ENCODE measurements at regions of chr5 and their contacts with region 1.

Region 1: GRCh38 chr5:112551419-112552032 is 132.4 kb upstream of the EPB41L4A start:
- H3K4me3 Mint-ChIP-seq: no peak overlapping the region
- H3K27ac Mint-ChIP-seq: peak overlapping the region; percentile 28
- H3K4me1 Mint-ChIP-seq: no peaks in the 10 kb centered on the region
- H3K27me3 Mint-ChIP-seq: peaks cover 4% of the 10 kb centered on the region

Region 2: DNA sequence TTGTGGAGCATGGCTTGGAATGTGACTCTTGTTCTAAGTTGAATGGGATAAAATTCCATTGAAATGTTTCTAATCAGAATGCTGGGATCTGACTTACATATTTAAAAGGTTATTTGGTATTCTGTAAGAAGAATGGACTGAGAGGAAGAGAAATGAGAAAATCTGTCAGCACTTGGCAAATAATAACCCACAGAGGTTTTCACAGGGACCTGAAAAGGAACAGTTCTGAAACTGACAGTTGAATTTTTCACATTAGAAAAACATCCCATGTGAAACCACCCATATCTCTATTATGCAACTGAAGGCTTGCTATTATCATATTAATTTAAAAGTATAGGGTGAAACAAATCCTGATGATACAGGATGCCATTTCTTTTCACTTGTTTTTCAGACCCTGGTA is 435.2 kb before region 1 on chr5:
- intact Hi-C with region 1: no loop called
- H3K4me3 Mint-ChIP-seq: no peak overlapping the region
- H3K27ac Mint-ChIP-seq: no peak overlapping the region
- H3K4me1 Mint-ChIP-seq: peaks cover 31% of the 10 kb centered on the region
- H3K27me3 Mint-ChIP-seq: peaks cover 8% of the 10 kb centered on the region

Region 3: GRCh38 chr5:112757468-112758208 is 206.1 kb after region 1 on chr5:
- intact Hi-C with region 1: loop called (anchors 1 kb)
- H3K4me3 Mint-ChIP-seq: no peak overlapping the region
- H3K27ac Mint-ChIP-seq: peak overlapping the region; percentile 34
- H3K4me1 Mint-ChIP-seq: peaks cover 5% of the 10 kb centered on the region
- H3K27me3 Mint-ChIP-seq: no peaks in the 10 kb centered on the region

Region 4: DNA sequence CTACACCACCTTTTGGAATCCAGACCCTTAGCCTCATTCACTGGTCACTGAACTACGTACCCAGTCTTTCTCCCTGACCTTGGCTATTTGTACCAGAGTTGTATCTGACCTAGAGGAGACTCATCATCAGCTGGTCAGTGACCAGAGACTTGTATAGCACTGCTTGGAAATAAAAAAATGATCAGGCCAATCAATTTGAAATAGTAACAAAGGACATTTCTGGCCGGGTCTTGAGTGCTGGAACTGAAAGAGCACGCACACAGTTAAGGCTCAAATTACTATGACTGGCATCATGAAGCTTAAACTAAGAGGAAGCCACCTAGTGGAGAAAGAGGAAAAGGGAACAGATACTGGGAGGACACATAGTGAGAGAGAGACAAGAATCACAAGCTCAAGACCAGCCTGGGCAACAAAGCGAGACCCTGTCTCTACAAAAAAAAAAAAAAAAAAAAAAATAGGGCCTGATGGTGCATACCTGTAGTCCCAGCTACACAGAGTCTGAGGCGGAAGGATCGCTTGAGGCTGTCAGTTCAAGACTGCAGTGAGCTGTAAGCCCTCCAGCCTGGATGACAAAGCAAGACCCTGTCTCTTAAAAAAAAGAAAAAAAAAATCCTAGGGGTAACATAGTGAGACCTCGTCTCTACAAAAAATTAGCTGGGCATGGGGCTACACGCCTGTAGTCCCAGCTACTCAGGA is 296.7 kb after region 1 on chr5:
- intact Hi-C with region 1: loop called (anchors 2 kb)
- H3K4me3 Mint-ChIP-seq: no peak overlapping the region
- H3K27ac Mint-ChIP-seq: no peak overlapping the region
- H3K4me1 Mint-ChIP-seq: peaks cover 5% of the 10 kb centered on the region
- H3K27me3 Mint-ChIP-seq: peaks cover 7% of the 10 kb centered on the region

Region 5: DNA sequence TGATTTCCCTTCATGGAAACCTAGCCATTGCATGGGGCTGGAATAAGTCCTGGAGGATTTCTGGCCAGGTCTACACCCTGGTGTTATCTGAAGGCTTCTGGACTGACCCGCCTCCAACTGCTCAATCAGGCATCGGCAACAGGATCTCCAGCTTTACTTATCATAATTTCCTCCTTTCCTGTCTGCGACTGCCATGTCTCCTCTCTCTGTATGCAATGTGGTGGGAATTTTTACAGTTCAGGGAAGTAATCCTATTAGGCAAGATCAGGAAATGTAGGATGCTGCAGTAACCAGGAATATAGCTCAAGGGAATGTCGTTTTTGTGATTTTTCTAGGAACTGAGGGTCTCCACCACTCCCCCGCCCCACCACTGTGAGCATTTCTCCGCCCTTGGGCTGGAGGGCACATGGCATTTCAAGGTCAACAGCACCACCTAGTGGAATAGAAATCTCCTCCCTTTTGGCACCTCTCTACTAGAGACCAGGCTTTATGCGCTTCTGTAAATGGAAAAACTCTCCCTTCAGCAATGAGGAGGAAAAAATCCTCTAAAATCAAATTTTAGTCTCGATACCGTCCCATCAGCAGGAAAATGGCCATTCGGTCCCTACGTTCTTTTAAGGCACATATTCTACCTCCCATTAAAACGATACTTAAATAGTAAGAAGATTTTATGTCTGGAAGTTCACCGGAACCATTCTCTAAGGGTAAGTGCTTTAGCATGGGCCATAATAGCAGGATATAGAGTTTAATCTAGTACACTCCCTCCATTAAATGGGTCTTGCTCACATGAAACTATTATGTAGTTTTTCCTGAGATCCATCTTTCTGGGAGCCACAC is 1055.0 kb after region 1 on chr5:
- intact Hi-C with region 1: loop called (anchors 10 kb)
- H3K4me3 Mint-ChIP-seq: no peak overlapping the region
- H3K27ac Mint-ChIP-seq: no peak overlapping the region
- H3K4me1 Mint-ChIP-seq: peaks cover 8% of the 10 kb centered on the region
- H3K27me3 Mint-ChIP-seq: peaks cover 24% of the 10 kb centered on the region

Measured in dendritic cell treated with granulocyte-macrophage colony-stimulating factor and Interleukin-4, amounts not matched to agents 40 ng/mL and 50 ng/mL, for 4 days (primary cell).